Activated T-helper 2 cell treated with anti-CD3 and anti-CD28 coated beads, Interferon-gamma antibody, Interleukin-2, Interleukin-4, amounts not matched to agents 10 μg/mL and 5 μg/mL and 100 μg/mL, durations not matched to agents 14 hours and 24 hours and 36 hours (primary cell): ENCODE measurements at regions of chr17 and their contacts with region 1.

Region 1: DNA sequence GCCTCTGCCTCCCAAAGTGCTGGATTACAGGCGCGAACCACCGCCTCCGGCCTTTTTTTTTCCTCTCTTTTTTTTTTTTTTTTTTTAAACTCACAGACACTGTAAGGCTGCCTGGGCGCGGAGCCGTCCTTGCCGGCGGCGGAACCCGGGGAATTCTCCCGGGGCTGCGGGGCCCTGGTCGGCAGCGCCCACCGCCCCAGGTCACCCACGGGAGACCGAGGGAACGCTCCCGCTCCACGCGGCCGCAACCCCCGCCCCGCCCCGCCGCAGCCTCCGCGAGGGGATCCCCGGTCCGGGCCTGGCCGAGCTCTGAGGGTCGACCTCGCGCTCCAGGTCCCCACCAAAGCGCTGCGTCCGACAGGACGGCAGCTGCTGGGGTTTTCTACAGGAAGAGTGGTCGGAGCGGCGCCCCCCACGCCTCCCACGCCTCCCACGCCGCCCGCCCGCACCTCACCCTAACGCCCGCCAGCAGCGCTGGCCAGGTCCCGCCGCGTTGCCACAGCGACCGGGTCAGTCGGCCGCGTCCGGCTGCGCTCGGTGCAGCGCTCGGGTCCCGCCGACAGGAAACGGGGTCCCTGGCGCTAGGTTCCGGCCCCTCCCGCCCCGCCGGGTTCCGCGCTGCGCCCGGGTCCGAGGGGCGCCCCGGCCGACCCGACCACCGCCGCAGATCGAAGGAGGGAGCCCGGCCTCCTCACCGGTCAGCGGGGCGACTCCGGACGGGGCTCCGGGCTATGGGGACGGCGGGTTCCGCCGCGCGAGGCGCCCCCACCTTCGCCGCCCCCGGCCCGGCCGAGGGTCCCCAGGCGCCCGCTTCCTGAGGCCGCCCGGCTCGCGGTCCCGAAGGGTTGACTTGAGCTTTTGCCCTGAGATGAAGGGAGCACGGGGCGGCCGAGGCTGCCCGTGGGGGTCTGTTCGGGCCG is at the start of gene CCDC57:
- DNase-seq: peak; percentile 65
- H3K4me3 Mint-ChIP-seq: peak within 1 kb of the TSS; percentile 74
- H3K27ac Mint-ChIP-seq: peak within 1 kb of the TSS; percentile 83
- H3K4me1 Mint-ChIP-seq: peaks cover 26% of the 10 kb centered on the region
- H3K27me3 Mint-ChIP-seq: no peaks in the 10 kb centered on the region
- total RNA-seq, gene CCDC57: 51.7 and 53.1 TPM in 2 replicates

Region 2: DNA sequence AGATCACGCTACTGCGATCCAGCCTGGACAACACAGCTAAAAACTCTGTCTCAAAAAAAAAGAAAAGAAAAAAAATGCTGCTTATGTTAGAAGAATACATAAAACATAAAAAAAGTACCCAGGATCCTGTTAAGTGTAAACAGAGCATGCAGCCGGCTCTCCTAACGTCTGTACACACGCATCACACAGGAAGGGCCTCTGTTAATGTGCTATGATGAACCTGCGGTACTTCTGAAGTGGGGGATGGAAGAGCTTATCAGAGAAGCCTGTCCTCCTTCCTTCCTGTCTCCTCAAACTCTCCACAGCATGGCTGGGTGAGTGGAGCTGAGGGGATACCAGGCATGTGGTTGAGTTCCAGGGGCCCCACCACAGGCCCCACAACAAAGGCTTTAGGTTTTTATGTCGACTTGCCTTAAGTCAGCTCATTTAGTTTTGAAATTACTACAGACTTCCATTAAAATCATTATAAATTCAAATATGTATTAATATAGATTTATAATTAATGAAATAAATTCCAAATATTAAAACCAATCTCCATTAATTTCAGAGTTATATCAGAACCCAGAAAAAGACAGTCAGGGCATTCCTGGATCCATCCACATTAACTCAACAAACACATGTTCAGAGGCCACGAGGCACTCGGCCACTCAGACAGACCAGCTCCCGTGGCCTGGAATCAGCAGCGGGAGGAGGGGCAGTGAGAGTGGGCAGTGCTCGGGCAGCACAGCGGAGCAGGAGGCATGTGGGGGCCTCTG is 11.7 kb before region 1 on chr17:
- intact Hi-C with region 1: loop called (anchors 2 kb)
- DNase-seq: peak; percentile 70
- H3K4me3 Mint-ChIP-seq: peak overlapping the region; percentile 54
- H3K27ac Mint-ChIP-seq: peak overlapping the region; percentile 90
- H3K4me1 Mint-ChIP-seq: peaks cover 60% of the 10 kb centered on the region
- H3K27me3 Mint-ChIP-seq: no peaks in the 10 kb centered on the region

Region 3: GRCh38 chr17:82230627-82231311 is 18.2 kb after region 1 on chr17:
- intact Hi-C with region 1: loop called (anchors 2 kb)
- DNase-seq: peak; percentile 64
- H3K4me3 Mint-ChIP-seq: peak overlapping the region; percentile 95
- H3K27ac Mint-ChIP-seq: no peak overlapping the region
- H3K4me1 Mint-ChIP-seq: peaks cover 8% of the 10 kb centered on the region
- H3K27me3 Mint-ChIP-seq: no peaks in the 10 kb centered on the region

Region 4: DNA sequence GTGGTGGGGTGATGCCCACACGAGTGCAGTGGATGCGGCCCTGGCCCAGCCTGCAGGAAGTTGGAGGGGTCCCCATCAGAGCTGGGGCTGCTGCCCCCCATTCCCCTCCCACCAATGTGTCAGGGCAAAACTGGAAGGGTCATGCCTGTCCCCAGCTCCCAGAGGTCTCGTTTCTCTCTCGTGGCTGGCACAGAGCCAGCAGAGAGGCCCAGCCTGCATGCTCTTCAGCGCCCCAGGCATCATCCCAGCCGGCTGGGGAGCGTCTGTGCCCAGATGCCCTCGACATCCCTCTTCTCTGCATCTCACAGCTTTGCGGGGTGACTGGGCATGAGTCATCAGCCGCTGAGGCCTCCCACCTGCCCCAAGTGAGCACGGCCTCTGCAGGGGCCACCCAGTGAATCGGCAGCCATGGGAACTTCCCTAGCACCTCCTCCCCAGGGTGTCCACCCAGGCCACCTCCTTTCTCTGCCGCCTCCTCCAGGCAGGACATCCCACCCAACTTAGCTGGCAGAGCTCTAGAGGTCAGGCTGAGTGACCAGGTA is 70.7 kb after region 1 on chr17:
- intact Hi-C with region 1: no loop called
- DNase-seq: no peak
- H3K4me3 Mint-ChIP-seq: no peak overlapping the region
- H3K27ac Mint-ChIP-seq: peak overlapping the region; percentile 19
- H3K4me1 Mint-ChIP-seq: peaks cover 22% of the 10 kb centered on the region
- H3K27me3 Mint-ChIP-seq: peaks cover 5% of the 10 kb centered on the region

Region 5: DNA sequence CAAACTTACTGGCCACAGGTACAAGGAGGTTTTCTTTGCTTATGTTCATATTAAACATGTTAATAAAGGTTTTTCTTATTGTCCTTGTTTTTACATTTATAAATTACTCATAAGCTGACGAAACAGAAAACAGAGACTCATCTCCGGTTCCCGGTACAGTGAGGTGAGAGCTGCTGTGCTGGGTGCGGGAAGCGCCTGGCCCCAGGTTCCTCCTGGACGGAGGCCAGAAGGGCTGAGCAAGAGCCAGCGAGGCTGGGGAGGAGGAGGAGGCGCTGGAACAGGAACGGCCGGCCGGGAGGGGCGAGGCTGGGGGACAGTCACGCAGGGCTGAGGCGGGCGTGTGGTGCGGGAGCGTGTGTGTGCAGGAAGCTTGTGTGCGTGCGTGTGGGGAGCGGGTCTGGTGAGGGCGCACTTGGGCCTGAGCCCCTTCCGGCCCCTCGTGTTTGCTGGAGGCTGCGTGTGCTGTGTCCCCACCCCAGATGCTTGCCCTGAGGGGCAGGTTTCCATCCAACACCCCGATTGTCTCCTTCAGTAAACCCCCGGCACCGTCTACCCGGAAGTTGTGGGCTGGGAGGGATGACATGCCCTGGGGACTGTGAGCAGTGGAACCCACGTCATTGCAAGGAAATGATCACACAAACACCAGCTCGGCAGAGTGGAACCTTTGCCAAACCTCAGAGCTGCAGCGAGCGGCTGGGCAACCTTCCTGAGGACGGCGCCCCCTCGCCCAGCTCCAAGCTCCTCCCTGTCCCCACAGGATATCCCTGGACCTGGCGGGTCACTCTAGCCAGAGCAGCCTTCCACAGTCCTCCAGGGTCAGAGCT is 85.3 kb after region 1 on chr17:
- intact Hi-C with region 1: no loop called
- DNase-seq: peak; percentile 89
- H3K4me3 Mint-ChIP-seq: peak overlapping the region; percentile 89
- H3K27ac Mint-ChIP-seq: peak overlapping the region; percentile 100
- H3K4me1 Mint-ChIP-seq: peaks cover 62% of the 10 kb centered on the region
- H3K27me3 Mint-ChIP-seq: no peaks in the 10 kb centered on the region